ENCODE measurements at regions of chr2 and their contacts with region 1.

Region 1: DNA sequence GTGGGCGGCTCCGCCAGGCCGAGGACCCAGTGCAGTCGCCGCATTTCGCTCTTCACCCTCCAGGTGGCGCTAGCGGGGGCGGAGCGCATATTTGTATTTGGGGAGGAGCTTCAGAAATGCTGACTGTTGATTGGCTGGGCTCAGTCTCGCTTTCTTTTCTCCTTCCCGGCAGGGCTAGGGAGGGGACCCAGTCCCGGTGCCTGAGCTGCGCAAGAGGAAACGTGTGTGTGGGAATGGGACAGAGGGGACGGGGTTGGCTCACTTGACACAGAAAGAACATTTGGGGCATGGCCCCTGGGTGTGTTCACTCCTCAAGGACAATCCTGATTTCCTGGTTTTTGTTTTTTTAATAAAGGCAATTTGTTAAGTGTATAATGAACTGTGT is 20.3 kb upstream of the DNMT3A start:
- DNase-seq: peak; percentile 94
- H3K4me3 ChIP-seq: peak overlapping the region; percentile 22
- H3K27ac ChIP-seq: no peak overlapping the region
- H3K4me1 ChIP-seq: no peaks in the 10 kb centered on the region
- H3K27me3 ChIP-seq: no peaks in the 10 kb centered on the region
- CTCF ChIP-seq: peak; percentile 99

Region 2: DNA sequence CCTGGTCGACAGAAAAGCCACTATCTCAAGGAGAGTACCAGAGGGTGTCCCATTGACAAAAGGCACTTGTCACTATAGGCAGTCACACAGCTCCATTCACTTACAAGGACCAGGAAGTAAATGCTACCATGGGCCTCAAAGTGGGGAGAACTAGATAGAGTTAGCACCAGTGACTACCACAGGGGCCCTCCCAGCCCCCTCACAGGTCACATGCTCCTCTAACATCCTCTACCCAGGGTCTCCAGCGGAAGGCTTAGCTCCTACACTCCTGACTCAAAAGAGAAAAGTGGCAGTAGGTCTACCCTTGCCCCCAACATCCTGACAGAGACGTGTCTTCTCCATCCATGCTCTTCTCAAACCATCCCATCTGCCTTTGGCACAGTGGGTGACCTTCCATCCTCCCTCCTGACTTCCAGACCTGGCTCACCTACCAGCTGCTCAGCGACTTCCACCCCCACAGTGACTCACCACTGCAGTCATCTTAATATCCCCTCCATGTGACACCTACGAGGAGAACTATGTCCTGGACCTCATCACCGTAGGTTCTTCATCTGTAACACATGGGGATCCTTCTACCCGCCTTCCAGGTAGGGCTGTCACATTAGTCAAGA is 14.7 kb before region 1 on chr2:
- CTCF ChIA-PET with region 1: interaction called, 11 read pairs
- POLR2A ChIA-PET with region 1: no interaction called
- intact Hi-C with region 1: no loop called
- DNase-seq: no peak
- H3K4me3 ChIP-seq: no peak overlapping the region
- H3K27ac ChIP-seq: no peak overlapping the region
- H3K4me1 ChIP-seq: no peaks in the 10 kb centered on the region
- H3K27me3 ChIP-seq: no peaks in the 10 kb centered on the region
- CTCF ChIP-seq: no peak

Region 3: GRCh38 chr2:25376750-25377621 is 14.9 kb after region 1 on chr2:
- CTCF ChIA-PET with region 1: interaction called, 14 read pairs
- POLR2A ChIA-PET with region 1: no interaction called
- intact Hi-C with region 1: no loop called
- DNase-seq: peak; percentile 96
- H3K4me3 ChIP-seq: peak overlapping the region; percentile 14
- H3K27ac ChIP-seq: peak overlapping the region; percentile 44
- H3K4me1 ChIP-seq: peaks cover 13% of the 10 kb centered on the region
- H3K27me3 ChIP-seq: no peaks in the 10 kb centered on the region
- CTCF ChIP-seq: peak; percentile 86

Region 4: DNA sequence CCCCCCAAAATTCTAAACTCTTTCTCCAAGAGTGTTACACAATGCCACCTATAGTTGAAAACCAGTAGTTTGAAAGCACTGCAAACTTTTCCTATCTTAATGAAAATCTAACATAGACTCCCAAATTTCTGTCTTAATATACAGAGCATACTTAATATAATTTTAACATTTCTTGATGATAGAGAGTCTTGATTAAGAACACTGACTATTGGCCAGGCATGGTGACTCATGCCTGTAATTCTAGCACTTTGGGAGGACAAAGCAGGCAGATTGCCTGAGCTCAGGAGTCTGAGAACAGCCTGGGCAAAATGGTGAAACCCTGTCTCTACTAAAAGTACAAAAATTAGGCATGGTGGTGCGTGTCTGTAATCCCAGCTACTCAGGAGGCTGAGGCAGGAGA is 482.0 kb after region 1 on chr2:
- CTCF ChIA-PET with region 1: interaction called, 12 read pairs
- POLR2A ChIA-PET with region 1: no interaction called
- intact Hi-C with region 1: no loop called
- DNase-seq: no peak
- H3K4me3 ChIP-seq: no peak overlapping the region
- H3K27ac ChIP-seq: no peak overlapping the region
- H3K4me1 ChIP-seq: no peaks in the 10 kb centered on the region
- H3K27me3 ChIP-seq: no peaks in the 10 kb centered on the region
- CTCF ChIP-seq: no peak

Measured in A673 (cell line).